Activated B cell treated with CpG ODN at 0.5 μM for 24 hours (primary cell): ENCODE measurements at regions of chr3 and their contacts with region 1.

Region 1: GRCh38 chr3:107927361-107928083 is 163.3 kb downstream of the CD47 start:
- DNase-seq: peak; percentile 66
- ATAC-seq: peak; percentile 93
- H3K4me3 Mint-ChIP-seq: peak overlapping the region; percentile 86
- H3K27ac Mint-ChIP-seq: peak overlapping the region; percentile 26
- H3K4me1 Mint-ChIP-seq: peaks cover 22% of the 10 kb centered on the region
- H3K27me3 Mint-ChIP-seq: peaks cover 10% of the 10 kb centered on the region
- CTCF ChIP-seq: peak; percentile 97

Region 2: GRCh38 chr3:107660306-107660976 is 267.1 kb before region 1 on chr3:
- CTCF ChIA-PET with region 1: interaction called, 10 read pairs
- POLR2A ChIA-PET with region 1: no interaction called
- intact Hi-C with region 1: loop called (anchors 1 kb)
- DNase-seq: no peak
- ATAC-seq: no peak
- H3K4me3 Mint-ChIP-seq: no peak overlapping the region
- H3K27ac Mint-ChIP-seq: no peak overlapping the region
- H3K4me1 Mint-ChIP-seq: peaks cover 18% of the 10 kb centered on the region
- H3K27me3 Mint-ChIP-seq: no peaks in the 10 kb centered on the region
- CTCF ChIP-seq: peak; percentile 85

Region 3: DNA sequence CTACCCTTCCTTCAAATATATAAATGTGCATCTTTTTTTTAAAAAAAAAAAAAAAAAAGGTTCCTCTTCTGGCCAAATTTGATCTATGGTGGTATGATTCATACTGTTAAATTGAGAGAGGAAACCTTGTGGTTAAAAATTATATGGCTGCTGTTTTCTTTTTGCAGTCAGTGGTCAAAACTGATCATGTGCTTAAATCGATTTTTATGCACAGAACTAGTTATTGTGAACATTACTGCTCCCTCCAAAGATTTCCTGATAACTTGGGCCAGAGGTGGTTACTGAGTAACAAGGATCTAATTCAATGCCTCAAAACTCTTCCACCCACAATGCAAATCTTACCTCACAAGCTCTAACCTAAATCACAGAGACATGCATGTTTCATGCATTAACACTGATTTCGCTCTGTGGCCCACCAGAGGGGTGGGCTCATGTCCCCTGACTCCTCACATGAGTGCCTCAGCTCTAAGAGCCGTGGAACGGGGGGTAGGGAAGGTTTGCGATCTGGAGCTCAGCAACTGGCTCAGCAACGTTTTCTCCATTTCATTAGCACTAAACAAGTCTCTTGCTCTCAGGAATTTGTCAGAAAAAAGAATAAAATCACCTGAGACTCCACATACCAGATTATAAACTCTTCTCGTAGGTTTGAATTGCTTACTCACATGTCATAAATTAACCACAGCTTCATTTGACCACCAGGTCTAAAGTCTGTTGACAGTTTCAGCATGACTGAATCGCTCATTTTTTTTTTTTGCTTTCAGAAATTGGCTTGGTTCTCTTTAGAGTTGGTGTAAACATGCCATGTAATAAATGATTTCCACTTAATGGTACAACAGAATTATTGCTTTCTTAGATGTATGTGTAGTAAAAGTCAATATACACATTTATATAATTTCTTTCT is 117.1 kb before region 1 on chr3:
- CTCF ChIA-PET with region 1: no interaction called
- POLR2A ChIA-PET with region 1: no interaction called
- intact Hi-C with region 1: loop called (anchors 5 kb)
- DNase-seq: no peak
- ATAC-seq: peak; percentile 45
- H3K4me3 Mint-ChIP-seq: no peak overlapping the region
- H3K27ac Mint-ChIP-seq: peak overlapping the region; percentile 53
- H3K4me1 Mint-ChIP-seq: peaks cover 15% of the 10 kb centered on the region
- H3K27me3 Mint-ChIP-seq: no peaks in the 10 kb centered on the region
- CTCF ChIP-seq: no peak

Region 4: GRCh38 chr3:107938143-107938542 is 10.6 kb after region 1 on chr3:
- CTCF ChIA-PET with region 1: interaction called, 10 read pairs
- POLR2A ChIA-PET with region 1: no interaction called
- intact Hi-C with region 1: no loop called
- DNase-seq: no peak
- ATAC-seq: no peak
- H3K4me3 Mint-ChIP-seq: no peak overlapping the region
- H3K27ac Mint-ChIP-seq: no peak overlapping the region
- H3K4me1 Mint-ChIP-seq: no peaks in the 10 kb centered on the region
- H3K27me3 Mint-ChIP-seq: peaks cover 3% of the 10 kb centered on the region
- CTCF ChIP-seq: no peak

Region 5: GRCh38 chr3:107962946-107963345 is 35.4 kb after region 1 on chr3:
- CTCF ChIA-PET with region 1: no interaction called
- POLR2A ChIA-PET with region 1: no interaction called
- intact Hi-C with region 1: no loop called
- DNase-seq: no peak
- ATAC-seq: no peak
- H3K4me3 Mint-ChIP-seq: no peak overlapping the region
- H3K27ac Mint-ChIP-seq: no peak overlapping the region
- H3K4me1 Mint-ChIP-seq: no peaks in the 10 kb centered on the region
- H3K27me3 Mint-ChIP-seq: no peaks in the 10 kb centered on the region
- CTCF ChIP-seq: no peak

Region 6: GRCh38 chr3:107978131-107979055 is 50.9 kb after region 1 on chr3:
- CTCF ChIA-PET with region 1: no interaction called
- POLR2A ChIA-PET with region 1: no interaction called
- intact Hi-C with region 1: no loop called
- DNase-seq: no peak
- ATAC-seq: no peak
- H3K4me3 Mint-ChIP-seq: no peak overlapping the region
- H3K27ac Mint-ChIP-seq: no peak overlapping the region
- H3K4me1 Mint-ChIP-seq: peaks cover 12% of the 10 kb centered on the region
- H3K27me3 Mint-ChIP-seq: no peaks in the 10 kb centered on the region
- CTCF ChIP-seq: no peak

Region 7: DNA sequence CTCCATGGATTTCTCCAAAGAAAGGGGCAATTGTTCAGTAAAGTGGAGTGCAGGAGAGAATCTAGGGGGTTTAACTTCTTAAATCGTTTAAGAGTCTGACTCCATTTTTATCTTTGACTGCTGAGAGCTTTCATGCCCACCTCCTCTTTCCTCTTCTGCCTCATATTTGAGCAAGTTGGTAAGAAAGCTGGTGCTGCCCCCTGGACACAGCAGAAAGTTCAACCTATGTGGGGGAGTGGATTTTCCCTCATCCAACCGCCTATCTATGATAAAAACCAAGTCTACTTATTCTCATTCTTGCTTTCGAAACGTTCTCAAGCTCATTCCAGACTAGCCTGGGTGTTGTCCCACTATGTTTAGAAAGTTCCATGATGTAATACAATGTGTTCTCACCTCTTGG is 394.8 kb after region 1 on chr3:
- CTCF ChIA-PET with region 1: interaction called, 16 read pairs
- POLR2A ChIA-PET with region 1: no interaction called
- intact Hi-C with region 1: loop called (anchors 1 kb)
- DNase-seq: no peak
- ATAC-seq: peak; percentile 91
- H3K4me3 Mint-ChIP-seq: no peak overlapping the region
- H3K27ac Mint-ChIP-seq: peak overlapping the region; percentile 57
- H3K4me1 Mint-ChIP-seq: peaks cover 14% of the 10 kb centered on the region
- H3K27me3 Mint-ChIP-seq: no peaks in the 10 kb centered on the region
- CTCF ChIP-seq: no peak

Region 8: GRCh38 chr3:108552267-108553159 is 625.0 kb after region 1 on chr3:
- CTCF ChIA-PET with region 1: no interaction called
- POLR2A ChIA-PET with region 1: no interaction called
- intact Hi-C with region 1: loop called (anchors 5 kb)
- DNase-seq: no peak
- ATAC-seq: peak; percentile 34
- H3K4me3 Mint-ChIP-seq: peak overlapping the region; percentile 26
- H3K27ac Mint-ChIP-seq: peak overlapping the region; percentile 77
- H3K4me1 Mint-ChIP-seq: peaks cover 8% of the 10 kb centered on the region
- H3K27me3 Mint-ChIP-seq: no peaks in the 10 kb centered on the region
- CTCF ChIP-seq: no peak